Caco-2 (cell line): ENCODE measurements at regions of chr5 and their contacts with region 1.

Region 1: DNA sequence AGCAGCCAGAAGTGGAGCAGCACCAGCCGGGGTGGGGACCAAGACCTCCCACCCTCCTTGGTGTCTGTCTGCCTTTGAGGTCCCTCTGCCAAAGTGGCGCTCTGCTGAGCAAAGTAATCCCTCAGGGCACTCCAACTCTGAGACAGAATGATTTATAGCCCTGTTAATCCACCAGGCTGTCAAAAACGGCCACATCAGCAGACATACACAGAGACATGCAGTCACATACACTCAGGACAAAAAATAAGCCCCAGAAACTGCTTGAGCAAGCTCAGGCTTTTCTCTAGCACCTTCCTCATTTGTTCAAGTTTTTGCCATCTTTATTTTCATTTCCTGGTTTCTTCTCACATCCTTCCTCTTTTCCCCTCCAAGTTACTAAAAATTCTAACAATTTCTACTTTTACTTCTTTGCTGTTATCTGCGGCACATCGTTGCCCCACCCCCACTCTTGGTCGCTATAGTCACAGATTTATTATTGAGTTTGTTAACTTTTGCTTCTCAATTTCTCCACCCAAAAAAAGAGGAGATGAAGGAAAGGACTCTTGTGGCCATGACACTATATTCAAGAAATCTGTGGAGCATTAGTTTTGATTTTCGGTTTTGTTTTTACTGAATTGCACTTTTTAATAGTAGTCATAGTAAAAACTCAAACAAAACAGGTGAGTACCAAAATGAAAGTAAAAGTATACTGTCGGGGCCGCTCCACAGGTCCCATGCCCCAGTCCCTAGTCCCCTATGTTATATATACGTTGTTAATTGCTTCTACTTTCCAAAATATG is 17.4 kb upstream of the ADRB2 start:
- DNase-seq: peak in 1 of 2 experiments; percentile 4
- H3K4me3 ChIP-seq: no peak overlapping the region
- H3K4me3 Mint-ChIP-seq: peak overlapping the region; percentile 17
- H3K27ac Mint-ChIP-seq: no peak overlapping the region
- H3K4me1 ChIP-seq: peaks cover 7% of the 10 kb centered on the region
- H3K4me1 Mint-ChIP-seq: peaks cover 12% of the 10 kb centered on the region
- H3K27me3 ChIP-seq: peaks cover 1% of the 10 kb centered on the region; the same call in 1 of the 2 replicates
- H3K27me3 Mint-ChIP-seq: peaks cover 17% of the 10 kb centered on the region
- CTCF ChIP-seq: no peak

Region 2: DNA sequence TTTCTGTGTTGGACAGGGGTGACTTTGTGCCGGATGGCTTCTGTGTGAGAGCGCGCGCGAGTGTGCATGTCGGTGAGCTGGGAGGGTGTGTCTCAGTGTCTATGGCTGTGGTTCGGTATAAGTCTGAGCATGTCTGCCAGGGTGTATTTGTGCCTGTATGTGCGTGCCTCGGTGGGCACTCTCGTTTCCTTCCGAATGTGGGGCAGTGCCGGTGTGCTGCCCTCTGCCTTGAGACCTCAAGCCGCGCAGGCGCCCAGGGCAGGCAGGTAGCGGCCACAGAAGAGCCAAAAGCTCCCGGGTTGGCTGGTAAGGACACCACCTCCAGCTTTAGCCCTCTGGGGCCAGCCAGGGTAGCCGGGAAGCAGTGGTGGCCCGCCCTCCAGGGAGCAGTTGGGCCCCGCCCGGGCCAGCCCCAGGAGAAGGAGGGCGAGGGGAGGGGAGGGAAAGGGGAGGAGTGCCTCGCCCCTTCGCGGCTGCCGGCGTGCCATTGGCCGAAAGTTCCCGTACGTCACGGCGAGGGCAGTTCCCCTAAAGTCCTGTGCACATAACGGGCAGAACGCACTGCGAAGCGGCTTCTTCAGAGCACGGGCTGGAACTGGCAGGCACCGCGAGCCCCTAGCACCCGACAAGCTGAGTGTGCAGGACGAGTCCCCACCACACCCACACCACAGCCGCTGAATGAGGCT is 17.1 kb after region 1 on chr5 and contains the start of gene ADRB2:
- CTCF ChIA-PET with region 1: no interaction called
- POLR2A ChIA-PET with region 1: no interaction called
- intact Hi-C with region 1: loop called (anchors 2 kb)
- DNase-seq: peak; percentile 84 to 85
- H3K4me3 ChIP-seq: peak within 1 kb of the TSS; percentile 36
- H3K4me3 Mint-ChIP-seq: peak within 1 kb of the TSS; percentile 79
- H3K27ac Mint-ChIP-seq: no peak within 1 kb of the TSS
- H3K4me1 ChIP-seq: peaks cover 4% of the 10 kb centered on the region; the same call in 1 of the 2 replicates
- H3K4me1 Mint-ChIP-seq: peaks cover 8% of the 10 kb centered on the region
- H3K27me3 ChIP-seq: no peaks in the 10 kb centered on the region
- H3K27me3 Mint-ChIP-seq: peaks cover 28% of the 10 kb centered on the region
- CTCF ChIP-seq: peak in 1 of 2 experiments; percentile 1
- total RNA-seq, gene ADRB2: not detected in 2 replicates